PC-3 (cell line): ENCODE measurements at regions of chr13 and their contacts with region 1.

Region 1: GRCh38 chr13:33697936-33698335 is 120.0 kb upstream of the RFC3 start:
- DNase-seq: peak; percentile 57
- ATAC-seq: no peak
- H3K4me3 ChIP-seq: no peak overlapping the region
- H3K27ac ChIP-seq: peak overlapping the region; percentile 87
- H3K4me1 ChIP-seq: peaks cover 41% of the 10 kb centered on the region
- H3K27me3 ChIP-seq: no peaks in the 10 kb centered on the region
- CTCF ChIP-seq: no peak

Region 2: GRCh38 chr13:33642374-33643068 is 55.4 kb before region 1 on chr13:
- CTCF ChIA-PET with region 1: no interaction called
- POLR2A ChIA-PET with region 1: no interaction called
- intact Hi-C with region 1: no loop called
- DNase-seq: peak; percentile 32
- ATAC-seq: no peak
- H3K4me3 ChIP-seq: no peak overlapping the region
- H3K27ac ChIP-seq: no peak overlapping the region
- H3K4me1 ChIP-seq: peaks cover 15% of the 10 kb centered on the region
- H3K27me3 ChIP-seq: no peaks in the 10 kb centered on the region
- CTCF ChIP-seq: no peak

Region 3: DNA sequence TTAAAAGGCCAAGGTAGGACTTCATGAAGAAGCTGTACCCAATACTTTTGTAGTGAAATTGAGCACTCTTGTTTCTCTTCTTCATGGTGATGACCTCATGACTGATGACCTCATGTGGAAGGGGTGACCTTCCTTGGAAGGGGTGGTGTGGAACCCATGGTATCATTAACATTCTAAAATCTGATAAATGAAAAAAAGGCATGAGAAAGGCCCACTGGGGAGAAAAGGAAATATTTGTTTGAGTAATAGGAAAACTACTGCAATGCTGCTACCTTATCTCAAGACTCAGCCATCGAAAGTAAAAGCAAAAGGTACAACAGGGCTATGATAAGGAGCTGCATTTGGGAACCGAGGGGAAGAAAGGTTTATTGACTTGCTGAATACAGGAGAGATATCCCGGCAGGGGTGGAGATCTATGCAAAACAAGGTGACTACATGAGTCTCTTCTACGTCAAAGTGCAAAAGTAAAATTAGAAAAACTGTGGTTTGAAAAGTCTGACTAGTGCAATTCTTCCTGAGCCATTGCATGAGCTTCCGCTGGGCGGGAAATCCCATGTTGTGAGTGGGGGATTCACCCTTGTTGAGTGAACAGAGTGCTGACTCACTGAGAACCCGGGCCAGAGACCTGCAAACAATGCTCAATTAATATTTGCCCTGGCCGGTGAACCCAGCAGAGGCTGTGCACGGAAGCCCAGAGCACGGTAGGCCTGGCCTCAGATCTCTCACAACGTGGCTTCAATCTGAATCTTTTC is 18.9 kb before region 1 on chr13:
- CTCF ChIA-PET with region 1: no interaction called
- POLR2A ChIA-PET with region 1: no interaction called
- intact Hi-C with region 1: loop called (anchors 1 kb)
- DNase-seq: peak; percentile 90
- ATAC-seq: peak; percentile 88
- H3K4me3 ChIP-seq: peak overlapping the region; percentile 46
- H3K27ac ChIP-seq: peak overlapping the region; percentile 96
- H3K4me1 ChIP-seq: peaks cover 30% of the 10 kb centered on the region
- H3K27me3 ChIP-seq: no peaks in the 10 kb centered on the region
- CTCF ChIP-seq: no peak